Activated CD8-positive, alpha-beta T cell treated with anti-CD3 and anti-CD28 coated beads, Interleukin-2, amount 10 ng/mL, durations not matched to agents 7 days and 5 days (primary cell): ENCODE measurements at regions of chrX and their contacts with region 1.

Region 1: DNA sequence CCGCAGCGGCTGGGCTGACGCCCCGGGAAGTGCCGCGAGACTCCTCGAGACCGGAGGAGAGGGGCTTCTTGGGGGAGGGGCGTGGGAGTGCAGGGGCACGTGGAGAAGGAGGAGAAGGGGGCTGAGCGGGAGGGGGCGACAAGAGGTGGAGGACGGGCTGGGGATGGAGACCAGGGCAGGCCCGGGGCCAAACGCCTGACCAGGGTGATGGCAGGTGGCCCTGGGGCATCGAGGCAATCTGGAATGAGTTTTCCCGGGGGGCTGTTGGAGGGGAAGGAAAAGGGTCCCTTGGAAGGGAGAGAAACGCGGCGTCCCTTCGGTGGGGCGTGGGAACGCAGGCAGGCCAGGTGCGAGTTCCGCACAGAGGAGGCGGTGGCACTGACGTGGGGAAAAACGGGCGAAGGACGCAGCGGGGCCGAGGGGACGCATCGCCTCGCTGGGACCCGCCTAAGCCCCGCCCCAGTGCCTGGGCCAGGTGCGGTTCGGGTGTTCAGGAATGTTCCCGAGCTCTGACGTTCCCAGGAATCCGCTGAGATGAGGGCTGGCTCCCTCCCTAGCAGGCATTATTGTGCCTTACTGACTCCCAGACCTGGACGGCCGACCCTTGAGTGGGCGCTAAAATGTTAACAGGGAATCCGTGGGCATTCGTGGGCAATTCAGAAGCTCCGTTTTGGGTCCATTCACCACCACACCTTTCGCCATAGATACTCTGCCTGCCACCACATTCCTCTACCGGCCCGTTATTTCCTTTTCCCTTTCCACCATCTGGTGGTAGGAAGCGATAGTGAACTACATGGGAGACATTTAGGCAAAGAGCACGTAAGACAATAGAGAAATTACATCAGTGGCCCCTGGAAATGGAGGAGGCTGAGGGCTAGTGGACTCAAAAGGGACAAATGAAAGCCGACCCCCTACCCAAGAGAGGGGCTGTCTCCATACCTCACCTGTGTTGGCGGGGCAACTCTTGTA is 795 bp upstream of the SH3KBP1 start:
- DNase-seq: peak; percentile 54
- ATAC-seq: peak; percentile 35
- H3K4me3 Mint-ChIP-seq: peak overlapping the region; percentile 75
- H3K27ac Mint-ChIP-seq: peak overlapping the region; percentile 79
- H3K4me1 Mint-ChIP-seq: peaks cover 54% of the 10 kb centered on the region
- H3K27me3 Mint-ChIP-seq: no peaks in the 10 kb centered on the region

Region 2: DNA sequence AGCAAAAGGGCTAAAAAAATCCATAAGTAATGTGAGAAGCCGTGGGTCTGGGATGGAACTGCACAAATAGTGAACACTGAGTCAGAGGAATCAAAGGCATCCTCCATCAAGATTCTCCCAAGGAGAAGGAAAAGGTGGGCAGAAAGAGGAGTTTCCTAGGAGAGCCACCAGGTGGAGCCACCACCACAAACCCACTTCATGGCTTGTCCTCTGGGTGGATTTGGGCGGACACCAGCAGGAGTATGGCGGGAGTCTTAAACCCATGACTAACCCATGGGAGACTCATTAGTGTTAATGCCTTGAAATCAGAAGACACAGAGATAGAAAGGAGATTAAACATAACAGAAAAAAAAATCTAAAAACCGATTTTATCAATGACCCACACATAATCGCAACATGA is 148.5 kb before region 1 on chrX:
- CTCF ChIA-PET with region 1: interaction called, 10 read pairs
- POLR2A ChIA-PET with region 1: no interaction called
- DNase-seq: peak; percentile 42
- ATAC-seq: no peak
- H3K4me3 Mint-ChIP-seq: no peak overlapping the region
- H3K27ac Mint-ChIP-seq: peak overlapping the region; percentile 64
- H3K4me1 Mint-ChIP-seq: peaks cover 62% of the 10 kb centered on the region
- H3K27me3 Mint-ChIP-seq: no peaks in the 10 kb centered on the region

Region 3: DNA sequence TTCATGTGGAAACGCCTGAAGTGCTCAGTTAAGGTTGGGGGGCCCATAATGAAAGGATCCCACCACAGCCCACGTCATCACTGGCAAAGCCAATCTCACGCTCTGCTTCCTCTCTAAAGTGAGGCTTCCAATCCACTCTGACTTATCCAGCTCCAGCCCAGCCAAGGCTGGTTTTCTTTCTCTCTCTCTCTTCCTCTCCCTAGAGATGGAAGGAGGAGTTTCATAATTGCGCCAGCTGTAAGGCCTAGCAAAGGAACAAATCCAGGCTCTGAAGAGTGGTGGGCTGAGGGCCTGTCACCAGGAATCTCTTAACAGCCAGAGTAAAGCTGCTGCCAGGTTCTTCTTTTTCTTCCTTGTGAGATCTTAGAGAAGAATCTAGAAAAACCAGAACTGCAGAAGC is 123.4 kb after region 1 on chrX:
- CTCF ChIA-PET with region 1: no interaction called
- POLR2A ChIA-PET with region 1: no interaction called
- DNase-seq: no peak
- ATAC-seq: no peak
- H3K4me3 Mint-ChIP-seq: no peak overlapping the region
- H3K27ac Mint-ChIP-seq: no peak overlapping the region
- H3K4me1 Mint-ChIP-seq: peaks cover 2% of the 10 kb centered on the region
- H3K27me3 Mint-ChIP-seq: no peaks in the 10 kb centered on the region